ENCODE measurements at regions of chr6 and their contacts with region 1.

Region 1: GRCh38 chr6:110873981-110874879 is at the start of gene AMD1:
- DNase-seq: peak; percentile 98
- CTCF ChIP-seq: no peak

Region 2: DNA sequence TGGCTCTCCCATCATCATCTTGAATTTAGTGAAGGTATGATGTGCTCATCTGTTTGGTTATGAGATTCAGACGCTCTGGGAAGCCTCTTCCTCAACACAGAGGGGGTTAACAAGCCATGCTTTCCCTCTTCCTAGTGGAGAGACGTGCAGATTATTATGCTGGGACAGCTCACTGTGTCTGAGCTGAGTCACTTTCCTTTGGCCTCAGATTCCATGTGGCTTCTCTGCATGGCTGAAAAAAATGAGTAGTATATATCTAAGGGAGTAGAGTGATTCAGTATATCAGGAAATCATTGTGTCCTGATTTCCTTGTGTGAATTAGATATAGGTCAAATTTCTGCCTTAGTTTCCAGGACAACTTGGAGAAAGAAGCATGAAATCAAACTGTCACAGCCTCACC is 1130.5 kb before region 1 on chr6:
- CTCF ChIA-PET with region 1: no interaction called
- POLR2A ChIA-PET with region 1: no interaction called
- DNase-seq: no peak
- CTCF ChIP-seq: no peak

Region 3: DNA sequence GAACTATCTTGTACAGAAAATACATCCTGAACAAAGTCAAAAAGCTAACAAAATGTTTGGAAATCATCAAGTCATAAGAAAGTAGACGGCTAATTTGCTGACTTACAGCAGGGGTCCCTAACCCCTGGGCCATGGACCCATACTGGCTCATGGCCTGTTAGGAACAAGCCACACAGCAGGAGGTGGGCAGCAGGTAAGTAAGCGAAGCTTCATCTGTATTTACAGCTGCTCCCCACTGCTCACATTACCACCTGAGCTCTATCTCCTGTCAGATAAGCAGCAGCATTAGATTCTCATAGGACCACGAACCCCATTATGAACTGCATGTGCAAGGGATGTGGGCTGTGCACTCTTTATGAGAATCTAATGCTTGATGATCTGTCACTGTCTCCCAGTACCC is 174.4 kb before region 1 on chr6:
- CTCF ChIA-PET with region 1: no interaction called
- POLR2A ChIA-PET with region 1: no interaction called
- DNase-seq: no peak
- CTCF ChIP-seq: no peak

Region 4: DNA sequence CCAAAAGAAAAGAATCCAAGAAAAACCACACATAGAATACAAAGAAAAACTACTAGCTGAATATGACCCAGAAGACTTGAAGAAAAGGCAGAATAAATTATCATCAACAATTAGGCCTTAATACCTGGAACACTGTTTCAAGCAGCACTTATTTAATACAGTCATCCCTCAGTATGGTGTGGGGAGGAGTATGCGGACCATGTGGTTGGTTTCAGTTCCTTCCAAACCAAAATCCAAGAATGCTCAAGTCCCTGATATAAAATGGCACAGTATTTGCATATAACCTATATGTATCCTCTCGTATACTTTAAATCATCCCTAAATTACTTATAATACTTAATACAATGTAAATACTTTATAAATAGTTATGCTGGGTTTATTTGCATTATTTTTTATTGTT is 75.0 kb before region 1 on chr6:
- CTCF ChIA-PET with region 1: no interaction called
- POLR2A ChIA-PET with region 1: no interaction called
- DNase-seq: no peak
- CTCF ChIP-seq: no peak

Region 5: GRCh38 chr6:110826236-110827129 is 47.7 kb before region 1 on chr6:
- CTCF ChIA-PET with region 1: interaction called, 4 read pairs
- POLR2A ChIA-PET with region 1: interaction called, 13 read pairs
- DNase-seq: no peak
- CTCF ChIP-seq: no peak

Region 6: DNA sequence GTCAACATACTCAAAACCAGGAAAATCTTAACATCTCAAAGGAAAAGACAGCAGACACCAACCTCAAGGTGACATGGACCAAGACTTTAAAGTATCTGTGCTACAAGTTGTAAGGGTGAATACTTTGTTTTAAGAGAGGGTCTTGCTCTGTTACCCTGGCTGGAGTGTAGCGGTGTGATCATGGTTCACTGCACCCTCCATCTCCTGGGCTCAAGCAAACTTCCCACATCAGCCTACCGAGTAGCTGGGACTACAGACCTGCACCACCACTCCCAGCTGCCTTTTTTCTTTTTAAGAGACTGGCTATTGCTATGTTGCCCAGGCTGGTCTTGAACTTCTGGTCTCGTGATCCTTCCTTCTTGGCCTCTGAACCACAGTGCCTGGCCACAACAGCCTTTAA is 10.1 kb after region 1 on chr6:
- CTCF ChIA-PET with region 1: interaction called, 45 read pairs
- POLR2A ChIA-PET with region 1: interaction called, 26 read pairs
- DNase-seq: no peak
- CTCF ChIP-seq: no peak

Region 7: DNA sequence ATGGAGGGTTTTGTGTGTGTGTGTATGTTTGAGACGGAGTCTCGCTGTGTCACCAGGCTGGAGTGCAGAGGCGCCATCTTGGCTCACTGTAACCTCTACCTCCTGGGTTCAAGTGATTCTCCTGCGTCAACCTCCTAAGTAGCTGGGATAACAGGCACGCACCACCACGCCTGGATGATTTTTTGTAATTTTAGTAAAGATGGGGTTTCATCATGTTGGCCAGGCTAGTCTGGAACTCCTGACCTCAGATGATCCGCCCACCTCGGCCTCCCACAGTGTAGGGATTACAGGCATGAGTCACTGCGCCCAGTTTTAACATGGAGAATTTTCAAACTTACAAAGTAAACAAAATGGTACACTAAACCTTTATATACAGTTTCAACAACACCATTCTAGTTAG is 23.2 kb after region 1 on chr6:
- CTCF ChIA-PET with region 1: interaction called, 4 read pairs
- POLR2A ChIA-PET with region 1: interaction called, 12 read pairs
- DNase-seq: no peak
- CTCF ChIP-seq: no peak

Region 8: GRCh38 chr6:110958329-110959192 is 84.3 kb after region 1 on chr6 and contains the start of gene GTF3C6:
- CTCF ChIA-PET with region 1: no interaction called
- POLR2A ChIA-PET with region 1: interaction called, 16 read pairs
- DNase-seq: peak; percentile 92
- CTCF ChIP-seq: no peak

Region 9: GRCh38 chr6:111011360-111012142 is 137.3 kb after region 1 on chr6:
- CTCF ChIA-PET with region 1: no interaction called
- POLR2A ChIA-PET with region 1: no interaction called
- DNase-seq: peak; percentile 58
- CTCF ChIP-seq: peak; percentile 58

Measured in GM10248 (cell line).